ENCODE measurements at regions of chr2 and their contacts with region 1.

Region 1: GRCh38 chr2:20642055-20642971 is 8.6 kb downstream of the HS1BP3 start:
- DNase-seq: peak; percentile 81 to 94 (median 90)
- H3K4me3 ChIP-seq: no peak overlapping the region
- H3K27ac ChIP-seq: peak overlapping the region; percentile 84 to 97 (median 96)
- H3K4me1 ChIP-seq: peaks cover 15 to 28% of the 10 kb centered on the region in 2 donors
- H3K27me3 ChIP-seq: no peaks in the 10 kb centered on the region
- CTCF ChIP-seq: peak; percentile 94 to 99 (median 96)
- POLR2A ChIP-seq: no peak

Region 2: GRCh38 chr2:20356042-20356441 is 286.3 kb before region 1 on chr2:
- intact Hi-C with region 1: no loop called
- DNase-seq: no peak
- H3K4me3 ChIP-seq: no peak overlapping the region
- H3K27ac ChIP-seq: peak overlapping the region in 1 of 5 donors; percentile 76
- H3K4me1 ChIP-seq: peaks cover 13 to 17% of the 10 kb centered on the region in 2 donors
- H3K27me3 ChIP-seq: no peaks in the 10 kb centered on the region
- CTCF ChIP-seq: no peak
- POLR2A ChIP-seq: no peak

Region 3: DNA sequence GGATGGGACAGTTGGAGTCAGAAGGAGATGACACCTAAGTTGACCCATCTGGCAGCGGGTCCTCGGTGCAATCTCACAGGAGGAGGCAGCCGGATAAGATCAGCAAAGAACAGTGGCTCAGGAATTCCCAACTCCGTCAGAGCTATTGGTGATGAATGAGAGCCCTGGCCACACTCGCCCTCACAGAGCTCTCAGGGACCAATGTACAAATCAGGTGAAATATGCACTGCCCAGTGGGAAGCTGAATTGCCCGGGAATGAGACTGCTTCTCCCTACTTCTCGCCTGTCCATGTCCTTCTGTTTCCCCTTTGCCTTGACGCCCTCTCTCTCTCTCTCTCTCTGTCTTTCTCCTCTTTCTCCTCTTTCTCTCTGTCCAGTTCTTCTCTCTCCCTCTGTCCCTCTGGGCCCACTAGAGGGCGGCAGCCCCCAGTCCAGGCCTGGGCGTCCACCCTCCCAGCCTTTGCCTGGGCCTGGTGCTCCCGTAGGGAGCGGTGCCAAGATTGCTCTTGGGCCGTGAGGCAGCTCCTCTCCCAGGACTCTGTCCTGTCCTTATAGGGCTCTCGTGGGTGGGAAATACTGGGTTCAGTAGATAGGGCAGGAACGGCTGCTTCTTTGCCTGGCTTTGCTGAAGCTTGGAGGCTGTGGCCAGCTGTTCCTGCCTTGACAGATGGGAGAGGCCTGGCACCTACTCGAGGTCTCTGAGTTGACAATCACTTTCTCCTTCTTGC is 263.4 kb before region 1 on chr2:
- intact Hi-C with region 1: loop called in 1 of 2 experiments (anchors 10 kb)
- DNase-seq: peak; percentile 85 to 93 (median 90)
- H3K4me3 ChIP-seq: no peak overlapping the region
- H3K27ac ChIP-seq: peak overlapping the region in 2 of 5 donors; percentile 42 to 51
- H3K4me1 ChIP-seq: peaks cover 0 to 17% of the 10 kb centered on the region in 2 donors
- H3K27me3 ChIP-seq: no peaks in the 10 kb centered on the region
- CTCF ChIP-seq: peak; percentile 68 to 86 (median 82)
- POLR2A ChIP-seq: no peak

Region 4: DNA sequence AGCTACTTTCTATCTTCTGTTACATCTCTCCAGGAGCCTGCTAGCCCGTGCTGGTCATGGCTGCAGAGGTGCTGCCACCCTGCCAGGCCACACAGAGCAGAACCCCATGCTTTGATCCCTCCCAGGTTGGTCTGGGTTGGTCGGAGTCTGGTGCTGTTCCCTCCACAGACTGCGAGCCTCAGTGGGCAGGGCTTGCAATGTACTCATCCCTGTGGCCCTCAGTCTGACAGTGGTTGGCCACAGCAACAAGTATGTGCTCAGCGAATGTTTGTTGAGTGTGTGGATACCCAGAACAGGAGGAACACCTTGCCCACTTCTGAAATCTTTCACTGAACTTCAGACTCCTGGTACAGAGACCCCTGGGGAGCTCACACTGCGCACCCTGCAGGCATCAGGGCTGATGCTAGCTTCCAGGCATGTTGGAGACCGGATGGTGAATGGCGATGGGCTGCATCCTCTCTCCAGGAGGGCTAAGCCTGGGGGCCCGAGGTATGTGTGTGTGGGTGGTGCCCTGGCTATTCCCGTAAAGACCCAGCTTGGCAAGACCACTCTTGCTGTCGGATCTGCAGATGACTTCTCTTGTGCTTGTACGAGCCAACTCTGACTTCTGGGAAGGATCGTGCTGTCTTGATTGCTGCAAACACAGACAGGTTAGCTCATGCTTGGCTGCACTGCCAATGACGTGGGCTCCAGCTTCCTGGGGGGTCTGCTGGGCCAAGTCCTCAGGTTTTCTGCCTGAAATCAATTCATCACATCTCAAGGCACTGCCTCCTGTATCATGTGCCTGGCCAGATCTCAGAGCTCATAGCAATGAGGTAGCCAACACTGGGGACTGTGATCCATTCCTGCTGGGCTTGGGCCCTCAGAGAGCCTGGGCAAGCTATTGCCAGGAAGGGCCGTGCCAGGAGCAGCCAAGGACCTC is 151.8 kb before region 1 on chr2:
- intact Hi-C with region 1: no loop called
- DNase-seq: peak in 6 of 7 donors; percentile 46 to 83 (median 70)
- H3K4me3 ChIP-seq: no peak overlapping the region
- H3K27ac ChIP-seq: peak overlapping the region in 3 of 5 donors; percentile 68 to 78 (median 73)
- H3K4me1 ChIP-seq: peaks cover 15 to 33% of the 10 kb centered on the region in 2 donors
- H3K27me3 ChIP-seq: no peaks in the 10 kb centered on the region
- CTCF ChIP-seq: no peak
- POLR2A ChIP-seq: peak in 1 of 2 donors; percentile 29

Region 5: GRCh38 chr2:20838016-20838415 is 195.7 kb after region 1 on chr2:
- intact Hi-C with region 1: no loop called
- DNase-seq: no peak
- H3K4me3 ChIP-seq: no peak overlapping the region
- H3K27ac ChIP-seq: no peak overlapping the region
- H3K4me1 ChIP-seq: no peaks in the 10 kb centered on the region
- H3K27me3 ChIP-seq: peaks cover 6% of the 10 kb centered on the region
- CTCF ChIP-seq: no peak
- POLR2A ChIP-seq: no peak

Region 6: GRCh38 chr2:22468194-22468593 is 1825.9 kb after region 1 on chr2:
- intact Hi-C with region 1: no loop called
- DNase-seq: no peak
- H3K4me3 ChIP-seq: no peak overlapping the region
- H3K27ac ChIP-seq: no peak overlapping the region
- H3K4me1 ChIP-seq: no peaks in the 10 kb centered on the region
- H3K27me3 ChIP-seq: no peaks in the 10 kb centered on the region
- CTCF ChIP-seq: no peak
- POLR2A ChIP-seq: no peak

Measured in adrenal gland (tissue), 19 donors.